HCT116 (cell line): ENCODE measurements at regions of chr1 and their contacts with region 1.

Region 1: DNA sequence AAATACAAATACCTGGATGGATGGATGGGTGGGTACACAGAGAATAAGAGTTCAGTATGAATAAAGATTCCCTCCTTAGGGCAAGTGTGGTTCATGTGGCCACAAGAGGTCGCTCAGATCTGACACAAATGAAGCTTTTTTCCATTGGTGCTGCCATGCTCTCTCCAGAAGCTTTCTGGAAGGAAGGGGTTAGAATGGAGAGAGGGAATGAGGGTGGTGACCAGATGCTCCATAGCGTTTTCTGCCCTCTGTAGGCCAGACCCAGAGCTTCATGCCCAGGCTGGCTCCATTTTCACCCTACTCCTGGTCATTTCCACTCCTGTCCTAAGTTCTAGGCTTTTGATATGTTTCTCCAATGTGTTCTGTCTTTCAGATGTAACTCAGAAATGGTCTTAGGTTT is 3.3 kb upstream of the FCRL6 start:
- DNase-seq: peak; percentile 90
- ATAC-seq: peak; percentile 97
- H3K4me3 ChIP-seq: no peak overlapping the region
- H3K27ac ChIP-seq: no peak overlapping the region
- H3K4me1 ChIP-seq: no peaks in the 10 kb centered on the region
- H3K27me3 ChIP-seq: peaks cover 24% of the 10 kb centered on the region
- CTCF ChIP-seq: peak; percentile 83 to 99 (median 91)
- POLR2A ChIP-seq: no peak
- RAD21 ChIP-seq: peak; percentile 96

Region 2: GRCh38 chr1:159214149-159214760 is 584.6 kb before region 1 on chr1:
- CTCF ChIA-PET with region 1: interaction called, 4 read pairs
- POLR2A ChIA-PET with region 1: no interaction called
- RAD21 ChIA-PET with region 1: interaction called in 1 of 2 experiments, 3 read pairs
- intact Hi-C with region 1: loop called (anchors 5 kb)
- DNase-seq: peak; percentile 10
- ATAC-seq: peak; percentile 86
- H3K4me3 ChIP-seq: no peak overlapping the region
- H3K27ac ChIP-seq: no peak overlapping the region
- H3K4me1 ChIP-seq: no peaks in the 10 kb centered on the region
- H3K27me3 ChIP-seq: peaks cover 4% of the 10 kb centered on the region; the same call in 1 of the 2 replicates
- CTCF ChIP-seq: peak; percentile 65 to 89 (median 84)
- POLR2A ChIP-seq: no peak
- RAD21 ChIP-seq: peak; percentile 61

Region 3: GRCh38 chr1:159780583-159781582 is 18.0 kb before region 1 on chr1 and contains the start of gene DUSP23:
- CTCF ChIA-PET with region 1: interaction called, 33 read pairs
- POLR2A ChIA-PET with region 1: no interaction called
- RAD21 ChIA-PET with region 1: no interaction called
- intact Hi-C with region 1: no loop called
- DNase-seq: peak; percentile 96
- ATAC-seq: peak; percentile 97
- H3K4me3 ChIP-seq: peak within 1 kb of the TSS; percentile 55 to 60
- H3K27ac ChIP-seq: peak within 1 kb of the TSS; percentile 65
- H3K4me1 ChIP-seq: peaks cover 3 to 21% of the 10 kb centered on the region in 2 experiments; a peak in 2 of 4 replicates
- H3K27me3 ChIP-seq: no peaks in the 10 kb centered on the region
- CTCF ChIP-seq: peak; percentile 89 to 97 (median 90)
- POLR2A ChIP-seq: no peak
- RAD21 ChIP-seq: peak; percentile 93
- total RNA-seq, gene DUSP23: 35.8 TPM

Region 4: DNA sequence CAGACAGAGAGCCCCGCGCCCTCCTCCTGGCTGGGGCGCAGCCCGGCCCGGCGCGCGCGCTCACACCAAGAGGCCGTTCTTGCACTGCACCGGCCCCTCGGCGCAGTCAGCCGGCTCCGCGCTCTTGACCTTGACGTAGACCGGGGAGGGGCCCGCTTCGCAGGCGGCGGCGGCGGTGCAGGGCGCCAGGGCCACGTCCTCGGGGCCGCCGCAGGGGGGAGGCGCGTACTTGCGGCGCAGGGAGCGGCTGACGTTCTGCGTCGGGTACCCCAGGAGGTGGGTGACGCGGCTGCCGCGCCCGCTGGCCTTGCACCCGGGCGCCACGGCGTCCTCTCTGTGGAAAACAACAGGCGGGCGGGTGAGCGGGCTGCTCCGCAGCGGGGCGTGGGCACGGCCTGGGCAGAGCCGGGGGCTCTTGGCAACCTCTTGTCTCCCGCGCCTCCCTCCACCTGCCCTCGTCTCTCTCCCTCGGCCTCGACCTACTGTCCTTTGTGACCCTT is 55.9 kb after region 1 on chr1:
- CTCF ChIA-PET with region 1: interaction called, 10 read pairs
- POLR2A ChIA-PET with region 1: no interaction called
- RAD21 ChIA-PET with region 1: no interaction called
- intact Hi-C with region 1: loop called (anchors 5 kb)
- DNase-seq: peak; percentile 54
- ATAC-seq: peak; percentile 87
- H3K4me3 ChIP-seq: peak overlapping the region; percentile 62 to 74
- H3K27ac ChIP-seq: peak overlapping the region; percentile 70
- H3K4me1 ChIP-seq: peaks cover 21 to 39% of the 10 kb centered on the region in 2 experiments
- H3K27me3 ChIP-seq: no peaks in the 10 kb centered on the region
- CTCF ChIP-seq: no peak
- POLR2A ChIP-seq: peak; percentile 79
- RAD21 ChIP-seq: no peak

Region 5: DNA sequence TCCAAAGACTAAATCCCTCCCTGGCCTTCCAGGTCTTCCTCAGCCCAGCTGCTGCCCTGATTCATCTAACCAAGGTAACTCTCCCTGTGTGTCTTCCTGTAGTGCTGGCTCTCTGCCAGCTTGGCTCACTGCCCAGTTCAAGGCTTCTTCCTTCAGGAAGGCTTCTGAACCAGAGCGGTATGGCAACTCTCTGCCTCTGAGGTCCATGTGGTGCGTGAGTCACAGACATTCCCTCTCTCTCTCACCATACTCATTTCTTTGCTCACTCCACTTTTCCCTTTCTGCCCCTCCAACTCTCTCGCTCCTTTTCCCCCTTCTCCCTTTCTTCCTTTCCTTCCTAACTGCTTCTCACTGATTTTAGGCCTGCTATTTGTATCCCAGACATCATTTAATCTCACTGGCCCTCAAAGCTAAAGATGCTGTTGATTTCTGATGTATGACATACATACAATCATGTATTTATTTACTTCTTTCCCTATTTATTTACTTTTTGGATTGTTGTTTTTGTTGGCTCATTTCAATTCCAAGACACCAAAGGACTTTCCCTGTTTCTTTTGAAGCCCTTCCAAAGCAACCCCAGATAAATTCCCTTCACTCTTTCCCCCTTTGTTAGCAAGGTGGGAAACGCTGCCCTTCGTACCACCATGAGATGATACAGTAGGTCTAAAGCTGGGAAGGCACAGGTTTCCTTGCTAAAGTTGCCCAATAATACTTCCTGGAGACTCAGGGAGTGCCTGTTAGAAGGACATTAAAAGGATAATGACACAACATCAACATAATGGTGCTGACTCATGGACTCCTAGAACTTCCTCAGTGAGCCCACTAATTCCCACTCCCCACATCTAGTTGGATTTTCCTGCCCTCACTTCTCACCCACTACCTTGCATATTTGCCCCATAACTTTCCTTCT is 83.3 kb after region 1 on chr1:
- CTCF ChIA-PET with region 1: interaction called, 11 read pairs
- POLR2A ChIA-PET with region 1: interaction called, 3 read pairs
- RAD21 ChIA-PET with region 1: no interaction called
- intact Hi-C with region 1: no loop called
- DNase-seq: peak; percentile 96
- ATAC-seq: peak; percentile 94
- H3K4me3 ChIP-seq: peak overlapping the region in 1 of 2 experiments; percentile 4; a peak in 1 of 4 replicates
- H3K27ac ChIP-seq: peak overlapping the region; percentile 49
- H3K4me1 ChIP-seq: peaks cover 21 to 37% of the 10 kb centered on the region in 2 experiments
- H3K27me3 ChIP-seq: no peaks in the 10 kb centered on the region
- CTCF ChIP-seq: no peak
- POLR2A ChIP-seq: no peak
- RAD21 ChIP-seq: no peak